B cell (primary cell): ENCODE measurements at regions of chr12 and their contacts with region 1.

Region 1: DNA sequence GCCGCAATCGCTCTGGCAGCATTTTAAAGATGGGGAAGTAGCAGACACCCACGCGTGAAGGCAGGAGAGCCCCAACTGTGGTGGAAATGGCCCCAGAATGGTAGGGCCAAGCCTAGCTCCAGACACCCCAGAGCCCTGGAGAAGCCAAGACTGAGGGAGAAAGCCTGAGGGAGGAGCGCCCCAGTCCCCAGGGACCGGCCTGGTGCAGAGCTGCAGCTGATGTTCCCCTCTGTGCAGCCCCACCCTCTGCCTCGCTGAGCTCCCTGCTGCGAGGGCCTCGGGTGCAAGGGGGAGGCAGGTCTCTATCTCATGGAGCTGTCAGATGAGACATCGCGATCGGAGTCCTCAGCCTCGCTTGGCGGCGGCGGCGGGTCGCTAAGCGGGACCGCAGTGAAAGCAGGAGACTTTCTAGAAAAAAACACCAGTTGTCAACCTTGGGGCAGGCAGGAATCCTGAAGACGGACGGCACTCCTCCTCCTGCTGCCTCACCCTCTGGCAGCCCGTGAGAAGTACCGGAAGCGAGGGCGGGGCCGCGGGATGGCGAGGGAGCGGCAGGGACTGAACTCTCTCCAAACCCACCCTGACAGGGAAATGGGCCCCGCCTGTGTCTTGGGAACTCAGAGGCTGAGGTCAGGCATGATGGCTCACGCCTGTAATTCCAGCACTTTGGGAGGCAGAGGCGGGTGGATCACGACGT is 6.0 kb downstream of the GAPDH start:
- DNase-seq: peak; percentile 54
- ATAC-seq: peak; percentile 46
- H3K4me3 ChIP-seq: peak overlapping the region in 4 of 5 experiments; percentile 6 to 50 (median 34)
- H3K4me3 Mint-ChIP-seq: peak overlapping the region; percentile 86
- H3K27ac ChIP-seq: peak overlapping the region in 1 of 2 donors; percentile 48
- H3K27ac Mint-ChIP-seq: peak overlapping the region; percentile 74
- H3K4me1 ChIP-seq: peaks cover 23 to 32% of the 10 kb centered on the region in 2 donors
- H3K4me1 Mint-ChIP-seq: peaks cover 44% of the 10 kb centered on the region
- H3K27me3 ChIP-seq: no peaks in the 10 kb centered on the region
- H3K27me3 Mint-ChIP-seq: no peaks in the 10 kb centered on the region
- CTCF ChIP-seq: no peak

Region 2: DNA sequence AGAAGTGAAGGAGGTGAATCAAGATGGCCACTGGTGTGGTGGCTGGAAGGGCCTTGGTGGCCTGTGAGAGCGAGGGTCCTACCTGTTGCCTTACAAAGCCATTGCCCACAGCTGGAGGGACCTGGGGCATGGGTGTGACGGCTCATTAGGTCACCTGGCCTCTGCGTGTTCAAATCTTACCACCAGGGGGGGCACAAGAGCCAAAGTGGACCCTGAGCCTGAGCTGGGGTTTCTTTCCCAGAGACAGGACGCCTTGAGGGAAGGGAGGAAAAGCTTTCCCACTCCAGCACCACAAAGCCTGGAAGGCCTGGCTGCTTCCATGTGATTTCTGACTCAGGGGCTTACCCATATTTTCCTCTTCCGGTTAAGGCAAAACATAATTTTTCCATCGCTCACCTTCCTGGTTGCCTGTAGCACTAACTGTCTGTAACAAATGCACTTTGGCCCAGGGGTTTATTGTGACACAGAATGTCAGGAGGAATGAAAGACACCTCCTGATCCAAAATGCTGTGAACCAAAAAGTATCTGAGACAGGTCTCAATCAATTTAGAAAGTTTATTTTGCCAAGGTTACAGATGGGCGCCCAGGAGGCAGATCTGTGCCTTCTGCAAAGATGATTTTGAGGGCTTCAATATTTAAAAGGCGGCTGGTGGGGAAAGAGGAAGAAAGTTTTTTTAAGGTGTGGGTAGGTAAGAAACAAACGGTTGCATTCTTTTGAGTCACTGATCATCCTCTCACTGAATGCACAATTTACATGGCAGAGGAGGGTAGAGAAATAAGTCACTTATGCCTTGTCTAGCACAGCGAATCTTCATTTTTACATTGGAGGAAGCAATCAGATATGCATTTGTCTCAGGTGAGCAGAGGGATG is 344.4 kb before region 1 on chr12:
- CTCF ChIA-PET with region 1: interaction called, 9 read pairs
- POLR2A ChIA-PET with region 1: interaction called, 5 read pairs
- intact Hi-C with region 1: loop called (anchors 2 kb)
- DNase-seq: peak; percentile 81
- ATAC-seq: peak; percentile 70
- H3K4me3 ChIP-seq: no peak overlapping the region
- H3K4me3 Mint-ChIP-seq: no peak overlapping the region
- H3K27ac ChIP-seq: no peak overlapping the region
- H3K27ac Mint-ChIP-seq: no peak overlapping the region
- H3K4me1 ChIP-seq: peaks cover 16 to 27% of the 10 kb centered on the region in 2 donors
- H3K4me1 Mint-ChIP-seq: peaks cover 25% of the 10 kb centered on the region
- H3K27me3 ChIP-seq: peaks cover 0 to 19% (median 3%) of the 10 kb centered on the region in 4 experiments
- H3K27me3 Mint-ChIP-seq: peaks cover 31% of the 10 kb centered on the region
- CTCF ChIP-seq: peak; percentile 96

Region 3: DNA sequence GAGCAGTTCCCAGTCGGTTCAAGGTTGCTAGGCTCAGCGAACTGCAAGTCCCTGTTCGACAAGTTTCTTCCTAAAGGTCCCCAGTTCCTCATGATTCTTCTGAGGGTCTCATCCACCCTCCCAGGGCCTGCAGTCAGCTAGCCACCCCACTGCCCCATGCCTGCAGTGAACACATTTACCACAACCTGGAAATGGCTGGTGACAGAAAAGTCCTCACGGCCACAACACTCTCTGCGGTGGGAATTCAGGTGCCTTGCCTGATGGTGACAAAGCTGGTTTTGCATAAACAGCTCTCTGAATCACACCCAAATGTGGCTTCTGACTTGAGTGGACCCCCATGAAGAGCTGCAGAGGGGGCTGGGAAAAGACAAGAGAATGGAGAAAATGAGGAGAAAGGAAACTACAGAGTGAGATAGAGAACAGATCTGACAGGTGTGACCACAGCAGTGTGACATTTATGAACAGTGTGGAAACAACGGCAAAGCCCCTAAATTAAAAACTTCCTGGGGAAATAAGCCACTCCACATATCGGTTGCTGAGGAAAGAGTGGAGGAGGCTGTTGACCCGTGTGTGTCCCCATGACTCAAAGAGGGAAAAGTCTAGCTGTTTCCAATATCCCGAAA is 96.9 kb before region 1 on chr12:
- CTCF ChIA-PET with region 1: interaction called, 10 read pairs
- POLR2A ChIA-PET with region 1: interaction called, 6 read pairs
- intact Hi-C with region 1: no loop called
- DNase-seq: peak; percentile 60
- ATAC-seq: peak; percentile 34
- H3K4me3 ChIP-seq: peak overlapping the region in 2 of 5 experiments; percentile 17 to 46
- H3K4me3 Mint-ChIP-seq: peak overlapping the region; percentile 92
- H3K27ac ChIP-seq: peak overlapping the region; percentile 62 to 78
- H3K27ac Mint-ChIP-seq: peak overlapping the region; percentile 92
- H3K4me1 ChIP-seq: peaks cover 44 to 57% of the 10 kb centered on the region in 2 donors
- H3K4me1 Mint-ChIP-seq: peaks cover 63% of the 10 kb centered on the region
- H3K27me3 ChIP-seq: no peaks in the 10 kb centered on the region
- H3K27me3 Mint-ChIP-seq: no peaks in the 10 kb centered on the region
- CTCF ChIP-seq: no peak

Region 4: GRCh38 chr12:6461401-6462233 is 78.7 kb before region 1 on chr12:
- CTCF ChIA-PET with region 1: interaction called, 48 read pairs
- POLR2A ChIA-PET with region 1: interaction called, 3 read pairs
- intact Hi-C with region 1: loop called (anchors 1 kb)
- DNase-seq: peak; percentile 94
- ATAC-seq: peak; percentile 87
- H3K4me3 ChIP-seq: peak overlapping the region in 2 of 5 experiments; percentile 20 to 23
- H3K4me3 Mint-ChIP-seq: peak overlapping the region; percentile 72
- H3K27ac ChIP-seq: peak overlapping the region; percentile 89 to 93
- H3K27ac Mint-ChIP-seq: peak overlapping the region; percentile 98
- H3K4me1 ChIP-seq: peaks cover 67 to 93% of the 10 kb centered on the region in 2 donors
- H3K4me1 Mint-ChIP-seq: peaks cover 86% of the 10 kb centered on the region
- H3K27me3 ChIP-seq: no peaks in the 10 kb centered on the region
- H3K27me3 Mint-ChIP-seq: no peaks in the 10 kb centered on the region
- CTCF ChIP-seq: no peak

Region 5: GRCh38 chr12:6554168-6555017 is 14.1 kb after region 1 on chr12:
- CTCF ChIA-PET with region 1: interaction called, 69 read pairs
- POLR2A ChIA-PET with region 1: no interaction called
- intact Hi-C with region 1: loop called (anchors 2 kb)
- DNase-seq: peak; percentile 82
- ATAC-seq: peak; percentile 70
- H3K4me3 ChIP-seq: peak overlapping the region in 4 of 5 experiments; percentile 52 to 93 (median 84)
- H3K4me3 Mint-ChIP-seq: peak overlapping the region; percentile 89
- H3K27ac ChIP-seq: no peak overlapping the region
- H3K27ac Mint-ChIP-seq: peak overlapping the region; percentile 67
- H3K4me1 ChIP-seq: peaks cover 12 to 38% of the 10 kb centered on the region in 2 donors
- H3K4me1 Mint-ChIP-seq: peaks cover 36% of the 10 kb centered on the region
- H3K27me3 ChIP-seq: no peaks in the 10 kb centered on the region
- H3K27me3 Mint-ChIP-seq: no peaks in the 10 kb centered on the region
- CTCF ChIP-seq: peak; percentile 81

Region 6: GRCh38 chr12:6899837-6900519 is 359.6 kb after region 1 on chr12:
- CTCF ChIA-PET with region 1: no interaction called
- POLR2A ChIA-PET with region 1: no interaction called
- intact Hi-C with region 1: no loop called
- DNase-seq: peak; percentile 32
- ATAC-seq: no peak
- H3K4me3 ChIP-seq: no peak overlapping the region
- H3K4me3 Mint-ChIP-seq: no peak overlapping the region
- H3K27ac ChIP-seq: no peak overlapping the region
- H3K27ac Mint-ChIP-seq: no peak overlapping the region
- H3K4me1 ChIP-seq: peaks cover 10 to 18% of the 10 kb centered on the region in 2 donors
- H3K4me1 Mint-ChIP-seq: peaks cover 8% of the 10 kb centered on the region
- H3K27me3 ChIP-seq: no peaks in the 10 kb centered on the region
- H3K27me3 Mint-ChIP-seq: no peaks in the 10 kb centered on the region
- CTCF ChIP-seq: no peak